ENCODE measurements at regions of chr16 and their contacts with region 1.

Region 1: DNA sequence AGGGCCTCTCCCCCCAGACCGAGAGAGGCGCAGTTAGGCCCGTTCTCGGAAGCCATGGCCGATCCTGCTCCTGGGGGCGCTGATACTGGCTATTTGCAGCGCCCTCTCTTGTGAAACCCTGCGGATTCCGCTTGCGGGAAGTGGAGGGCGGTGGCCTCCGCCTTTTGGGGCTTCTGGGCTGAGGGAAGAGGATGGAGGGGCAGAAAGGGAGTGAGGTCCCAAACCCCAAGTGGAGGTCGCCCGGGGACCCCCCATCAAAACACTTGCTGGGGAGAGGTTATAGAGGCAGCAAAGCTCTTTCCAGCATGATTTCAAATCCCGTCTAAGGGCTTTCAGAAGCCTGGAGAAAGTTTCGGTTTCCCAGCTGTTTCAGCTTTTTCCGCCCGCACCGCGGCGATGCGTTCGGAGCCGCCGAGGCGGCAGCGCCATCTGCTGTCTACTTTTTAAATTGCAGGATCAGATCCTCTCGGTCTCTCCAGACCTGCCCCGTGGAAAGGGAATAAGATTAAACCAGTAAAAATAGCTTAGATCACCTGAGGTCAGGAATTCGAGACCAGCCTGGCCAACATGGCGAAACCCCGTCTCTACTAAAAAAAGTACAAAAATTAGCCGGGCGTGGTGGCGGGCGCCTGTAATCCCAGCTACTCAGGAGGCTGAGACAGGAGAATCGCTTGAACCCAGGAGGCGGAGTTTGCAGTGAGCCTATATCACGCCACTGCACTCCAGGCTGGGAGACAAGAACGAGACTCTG is 15.8 kb downstream of the SNX20 start:
- DNase-seq: peak; percentile 90
- ATAC-seq: peak; percentile 43
- H3K4me3 Mint-ChIP-seq: peak overlapping the region; percentile 60
- H3K27ac Mint-ChIP-seq: peak overlapping the region; percentile 79
- H3K4me1 Mint-ChIP-seq: peaks cover 37% of the 10 kb centered on the region
- H3K27me3 Mint-ChIP-seq: no peaks in the 10 kb centered on the region

Region 2: GRCh38 chr16:50024684-50025536 is 640.4 kb before region 1 on chr16 and contains the start of gene CNEP1R1:
- CTCF ChIA-PET with region 1: interaction called, 4 read pairs
- POLR2A ChIA-PET with region 1: no interaction called
- intact Hi-C with region 1: loop called in 1 of 2 experiments (anchors 2 kb)
- DNase-seq: peak; percentile 95
- ATAC-seq: peak; percentile 97
- H3K4me3 Mint-ChIP-seq: peak within 1 kb of the TSS; percentile 96
- H3K27ac Mint-ChIP-seq: peak within 1 kb of the TSS; percentile 85
- H3K4me1 Mint-ChIP-seq: peaks cover 23% of the 10 kb centered on the region
- H3K27me3 Mint-ChIP-seq: no peaks in the 10 kb centered on the region
- total RNA-seq, gene CNEP1R1: 19.3 to 22.8 TPM

Region 3: DNA sequence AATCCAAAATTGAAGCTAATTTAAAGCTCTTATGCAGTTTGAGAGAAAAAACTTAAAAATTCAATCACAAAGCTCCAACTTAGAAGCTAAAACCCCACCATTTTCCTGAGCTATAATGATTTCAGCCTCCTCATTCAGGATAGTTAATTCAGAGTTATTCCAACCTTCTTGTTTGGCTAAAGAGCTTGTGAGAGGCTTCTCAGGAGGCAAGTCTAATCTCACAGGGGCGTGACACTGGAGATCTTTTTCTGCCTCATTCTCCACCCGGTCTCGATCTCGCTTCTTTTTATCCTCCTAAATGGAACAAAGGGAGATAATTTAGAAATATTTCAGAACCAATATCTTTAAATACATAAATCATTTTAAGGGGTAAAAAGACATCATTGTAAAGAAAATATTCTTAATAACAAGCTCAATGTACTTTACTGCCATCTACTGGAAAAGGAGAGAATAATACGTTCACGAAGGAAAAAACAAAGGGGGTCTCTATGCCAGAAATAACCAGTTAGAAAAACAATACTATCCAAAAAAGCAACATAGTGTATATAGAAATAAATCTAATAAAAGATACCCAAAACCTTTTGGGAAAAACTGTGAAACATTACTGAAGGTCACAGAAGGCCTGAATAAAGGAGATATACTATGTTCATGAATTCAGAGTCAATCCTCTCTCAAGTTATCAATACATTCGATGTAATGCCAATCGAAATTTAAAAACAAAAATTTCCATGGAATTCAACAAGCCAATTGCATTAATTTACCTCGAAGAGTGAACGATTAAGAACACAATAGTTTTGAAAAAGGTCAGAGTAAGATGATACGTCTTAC is 310.5 kb before region 1 on chr16:
- CTCF ChIA-PET with region 1: interaction called, 13 read pairs
- POLR2A ChIA-PET with region 1: no interaction called
- intact Hi-C with region 1: no loop called
- DNase-seq: no peak
- ATAC-seq: no peak
- H3K4me3 Mint-ChIP-seq: no peak overlapping the region
- H3K27ac Mint-ChIP-seq: no peak overlapping the region
- H3K4me1 Mint-ChIP-seq: peaks cover 34% of the 10 kb centered on the region
- H3K27me3 Mint-ChIP-seq: no peaks in the 10 kb centered on the region

Region 4: GRCh38 chr16:50548125-50548908 is 117.0 kb before region 1 on chr16 and contains the start of gene NKD1:
- CTCF ChIA-PET with region 1: interaction called, 5 read pairs
- POLR2A ChIA-PET with region 1: no interaction called
- intact Hi-C with region 1: loop called (anchors 1 to 5 kb)
- DNase-seq: peak; percentile 87
- ATAC-seq: peak; percentile 84
- H3K4me3 Mint-ChIP-seq: peak within 1 kb of the TSS; percentile 81
- H3K27ac Mint-ChIP-seq: no peak within 1 kb of the TSS
- H3K4me1 Mint-ChIP-seq: peaks cover 28% of the 10 kb centered on the region
- H3K27me3 Mint-ChIP-seq: no peaks in the 10 kb centered on the region
- total RNA-seq, gene NKD1: 1.8 to 3.1 TPM

Region 5: GRCh38 chr16:50681021-50681885 is 15.9 kb after region 1 on chr16 and contains the start of gene SNX20:
- CTCF ChIA-PET with region 1: interaction called, 97 read pairs
- POLR2A ChIA-PET with region 1: interaction called, 6 read pairs
- intact Hi-C with region 1: loop called in 1 of 2 experiments (anchors 2 kb)
- DNase-seq: peak; percentile 80
- ATAC-seq: peak; percentile 69
- H3K4me3 Mint-ChIP-seq: peak within 1 kb of the TSS; percentile 78
- H3K27ac Mint-ChIP-seq: peak within 1 kb of the TSS; percentile 94
- H3K4me1 Mint-ChIP-seq: peaks cover 85% of the 10 kb centered on the region
- H3K27me3 Mint-ChIP-seq: no peaks in the 10 kb centered on the region
- total RNA-seq, gene SNX20: 43.3 to 48.9 TPM

Region 6: DNA sequence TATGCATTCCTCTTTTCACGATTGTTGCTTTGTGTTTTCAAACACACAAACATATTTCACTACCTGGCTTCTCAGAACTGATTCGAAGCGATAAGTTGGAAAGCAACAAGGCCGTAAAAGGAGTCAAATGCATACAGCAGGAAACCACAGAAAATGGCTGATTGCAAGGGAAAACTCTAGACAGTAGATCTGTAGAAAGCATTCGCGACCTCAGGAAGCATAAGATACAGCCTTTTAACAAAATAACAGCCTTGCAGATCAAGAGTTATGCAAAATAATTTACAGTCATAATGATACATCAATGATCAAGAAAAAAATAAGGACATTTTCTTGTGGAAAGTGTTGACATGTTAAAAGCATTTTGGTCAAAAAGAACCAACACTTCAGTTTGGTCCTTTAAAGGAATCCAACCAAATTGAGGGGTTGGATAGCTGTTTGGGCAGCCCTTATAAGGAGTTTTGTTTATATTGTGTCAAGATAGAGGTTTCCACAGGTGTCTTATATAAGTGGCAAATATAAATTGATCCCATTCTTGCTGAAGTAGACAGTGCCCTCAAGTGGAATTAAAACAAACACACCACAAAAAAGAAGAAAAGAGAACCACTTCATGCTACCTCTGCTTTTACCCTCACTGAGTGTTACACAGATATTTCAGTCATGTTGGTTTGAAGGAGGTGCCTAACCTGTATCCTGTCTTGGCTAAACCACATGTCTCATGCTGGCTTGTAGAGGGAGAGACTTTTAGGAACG is 82.1 kb after region 1 on chr16:
- CTCF ChIA-PET with region 1: interaction called, 298 read pairs
- POLR2A ChIA-PET with region 1: interaction called, 5 read pairs
- intact Hi-C with region 1: loop called (anchors 1 kb)
- DNase-seq: no peak
- ATAC-seq: peak; percentile 74
- H3K4me3 Mint-ChIP-seq: peak overlapping the region; percentile 68
- H3K27ac Mint-ChIP-seq: peak overlapping the region; percentile 88
- H3K4me1 Mint-ChIP-seq: peaks cover 66% of the 10 kb centered on the region
- H3K27me3 Mint-ChIP-seq: no peaks in the 10 kb centered on the region

Region 7: DNA sequence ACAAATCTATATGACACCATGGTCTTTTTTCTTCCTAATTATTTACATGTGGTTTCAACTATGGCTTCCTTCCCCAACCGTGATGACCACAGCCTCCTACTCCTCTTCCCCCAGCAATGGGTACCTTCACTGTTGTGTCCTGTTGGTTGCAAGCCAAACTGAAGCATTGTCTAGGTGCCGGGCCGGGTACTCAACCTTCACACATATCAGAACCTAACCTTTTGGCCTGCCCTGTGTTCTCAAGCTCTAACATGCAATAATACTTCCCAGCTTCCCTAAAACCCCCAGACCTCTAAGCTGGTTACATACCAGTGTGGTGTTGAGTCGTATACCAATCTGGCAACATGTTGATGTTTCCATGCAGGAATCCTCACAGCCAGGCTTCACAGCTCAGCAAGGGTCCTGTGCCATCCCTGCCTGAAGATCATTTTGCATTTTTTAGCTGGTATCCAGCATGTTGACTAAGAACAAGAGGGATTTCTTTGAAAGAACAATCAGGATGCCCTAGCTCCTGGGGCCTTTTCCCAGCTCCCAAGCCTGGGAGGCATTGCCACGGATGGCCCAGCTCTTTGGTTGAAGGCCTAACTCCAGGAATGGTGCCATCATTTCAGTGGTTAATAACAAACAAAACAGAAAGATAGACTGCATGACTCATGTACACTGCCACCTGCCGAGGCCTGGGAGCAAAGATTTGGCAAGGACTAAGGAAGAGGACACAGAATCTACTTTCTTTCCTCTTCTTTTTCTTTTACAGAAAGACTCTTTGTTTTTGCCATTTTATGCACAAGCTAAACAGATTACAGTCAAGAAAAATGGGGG is 859.5 kb after region 1 on chr16:
- CTCF ChIA-PET with region 1: no interaction called
- POLR2A ChIA-PET with region 1: no interaction called
- intact Hi-C with region 1: no loop called
- DNase-seq: no peak
- ATAC-seq: no peak
- H3K4me3 Mint-ChIP-seq: no peak overlapping the region
- H3K27ac Mint-ChIP-seq: no peak overlapping the region
- H3K4me1 Mint-ChIP-seq: no peaks in the 10 kb centered on the region
- H3K27me3 Mint-ChIP-seq: no peaks in the 10 kb centered on the region

Measured in activated CD4-positive, alpha-beta T cell treated with anti-CD3 and anti-CD28 coated beads for 36 hours (primary cell).